ENCODE measurements at regions of chr7 and their contacts with region 1.

Region 1: GRCh38 chr7:92590711-92591310 is 621 bp upstream of the FAM133B start:
- DNase-seq: peak in 1 of 9 experiments; percentile 11
- ATAC-seq: no peak
- H3K4me3 ChIP-seq: peak overlapping the region; percentile 71 to 74
- H3K4me3 Mint-ChIP-seq: peak overlapping the region; percentile 96
- H3K27ac ChIP-seq: no peak overlapping the region
- H3K27ac Mint-ChIP-seq: no peak overlapping the region
- H3K4me1 ChIP-seq: peaks cover 32% of the 10 kb centered on the region
- H3K4me1 Mint-ChIP-seq: peaks cover 46% of the 10 kb centered on the region
- H3K27me3 ChIP-seq: no peaks in the 10 kb centered on the region
- H3K27me3 Mint-ChIP-seq: no peaks in the 10 kb centered on the region
- CTCF ChIP-seq: no peak

Region 2: GRCh38 chr7:91940572-91941341 is 650.1 kb before region 1 on chr7 and contains the start of gene AKAP9:
- CTCF ChIA-PET with region 1: no interaction called
- POLR2A ChIA-PET with region 1: no interaction called
- intact Hi-C with region 1: loop called (anchors 1 to 10 kb)
- DNase-seq: peak; percentile 71 to 93 (median 89)
- ATAC-seq: peak; percentile 84
- H3K4me3 ChIP-seq: peak within 1 kb of the TSS; percentile 78 to 92
- H3K4me3 Mint-ChIP-seq: peak within 1 kb of the TSS; percentile 93
- H3K27ac ChIP-seq: peak within 1 kb of the TSS; percentile 91 to 93
- H3K27ac Mint-ChIP-seq: peak within 1 kb of the TSS; percentile 96
- H3K4me1 ChIP-seq: peaks cover 21% of the 10 kb centered on the region
- H3K4me1 Mint-ChIP-seq: peaks cover 45% of the 10 kb centered on the region
- H3K27me3 ChIP-seq: no peaks in the 10 kb centered on the region
- H3K27me3 Mint-ChIP-seq: no peaks in the 10 kb centered on the region
- CTCF ChIP-seq: no peak
- total RNA-seq, gene AKAP9: 61.2 to 61.3 TPM

Region 3: GRCh38 chr7:92609921-92610518 is 19.2 kb after region 1 on chr7:
- CTCF ChIA-PET with region 1: interaction called, 3 read pairs
- POLR2A ChIA-PET with region 1: interaction called, 3 read pairs
- intact Hi-C with region 1: loop called in 1 of 2 experiments (anchors 2 kb)
- DNase-seq: peak in 2 of 9 experiments; percentile 24 to 47
- ATAC-seq: no peak
- H3K4me3 ChIP-seq: no peak overlapping the region
- H3K4me3 Mint-ChIP-seq: no peak overlapping the region
- H3K27ac ChIP-seq: no peak overlapping the region
- H3K27ac Mint-ChIP-seq: no peak overlapping the region
- H3K4me1 ChIP-seq: no peaks in the 10 kb centered on the region
- H3K4me1 Mint-ChIP-seq: peaks cover 5% of the 10 kb centered on the region
- H3K27me3 ChIP-seq: no peaks in the 10 kb centered on the region
- H3K27me3 Mint-ChIP-seq: no peaks in the 10 kb centered on the region
- CTCF ChIP-seq: peak; percentile 53

Region 4: GRCh38 chr7:93117852-93118530 is 527.2 kb after region 1 on chr7 and contains the start of gene SAMD9:
- CTCF ChIA-PET with region 1: no interaction called
- POLR2A ChIA-PET with region 1: interaction called, 5 read pairs
- intact Hi-C with region 1: loop called in 1 of 2 experiments (anchors 2 kb)
- DNase-seq: peak; percentile 18 to 91 (median 60)
- ATAC-seq: peak; percentile 99
- H3K4me3 ChIP-seq: peak within 1 kb of the TSS; percentile 61 to 64
- H3K4me3 Mint-ChIP-seq: peak within 1 kb of the TSS; percentile 80
- H3K27ac ChIP-seq: peak within 1 kb of the TSS; percentile 58 to 81
- H3K27ac Mint-ChIP-seq: peak within 1 kb of the TSS; percentile 84
- H3K4me1 ChIP-seq: peaks cover 28% of the 10 kb centered on the region
- H3K4me1 Mint-ChIP-seq: peaks cover 47% of the 10 kb centered on the region
- H3K27me3 ChIP-seq: no peaks in the 10 kb centered on the region
- H3K27me3 Mint-ChIP-seq: no peaks in the 10 kb centered on the region
- CTCF ChIP-seq: no peak
- total RNA-seq, gene SAMD9: 23.5 to 23.8 TPM